Activated CD8-positive, alpha-beta T cell treated with anti-CD3 and anti-CD28 coated beads for 36 hours (primary cell): ENCODE measurements at regions of chr5 and their contacts with region 1.

Region 1: DNA sequence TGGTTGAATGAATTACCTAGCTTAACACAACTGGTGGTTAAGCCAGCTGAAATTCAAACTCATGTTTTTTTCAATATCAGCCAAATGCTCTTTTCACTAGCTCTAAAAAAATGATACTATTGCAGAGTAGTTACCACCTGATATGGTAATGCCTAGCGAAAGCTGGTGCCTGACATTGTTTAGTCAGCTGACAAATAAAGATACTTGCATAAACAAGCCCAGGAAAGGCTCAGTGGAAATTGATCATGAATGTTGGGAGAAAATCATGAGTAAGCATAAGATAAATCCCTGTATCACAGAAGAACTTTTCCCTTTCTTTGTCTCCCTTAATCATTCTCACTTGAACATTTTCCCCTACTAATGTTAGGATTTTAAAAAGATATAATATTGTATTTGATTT is 54.6 kb downstream of the FGF10 start:
- DNase-seq: no peak
- ATAC-seq: no peak
- H3K4me3 Mint-ChIP-seq: no peak overlapping the region
- H3K27ac Mint-ChIP-seq: no peak overlapping the region
- H3K4me1 Mint-ChIP-seq: no peaks in the 10 kb centered on the region
- H3K27me3 Mint-ChIP-seq: no peaks in the 10 kb centered on the region
- CTCF ChIP-seq: no peak

Region 2: DNA sequence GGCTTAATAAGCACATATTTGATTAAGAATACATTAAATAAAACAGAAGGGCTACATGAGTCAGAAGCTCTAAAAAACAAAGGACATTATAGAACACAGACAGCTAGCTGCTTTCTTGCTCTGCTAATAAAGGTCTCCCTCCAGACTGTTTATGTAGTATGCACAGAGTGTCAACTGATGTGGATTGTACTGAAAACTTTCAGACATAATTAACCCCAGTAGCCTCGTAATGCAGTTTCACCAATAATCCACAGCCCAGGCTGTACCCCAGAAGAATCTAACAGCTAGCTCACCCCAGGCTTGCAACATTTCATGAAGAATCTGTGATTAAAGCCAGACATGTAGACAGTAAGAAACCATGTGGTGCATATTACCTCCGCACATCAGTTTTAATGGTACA is 23.8 kb after region 1 on chr5:
- CTCF ChIA-PET with region 1: no interaction called
- POLR2A ChIA-PET with region 1: no interaction called
- intact Hi-C with region 1: loop called (anchors 2 kb)
- DNase-seq: no peak
- ATAC-seq: no peak
- H3K4me3 Mint-ChIP-seq: no peak overlapping the region
- H3K27ac Mint-ChIP-seq: no peak overlapping the region
- H3K4me1 Mint-ChIP-seq: no peaks in the 10 kb centered on the region
- H3K27me3 Mint-ChIP-seq: no peaks in the 10 kb centered on the region
- CTCF ChIP-seq: no peak